Mammary epithelial cell (primary cell): ENCODE measurements at regions of chr7 and their contacts with region 1.

Region 1: GRCh38 chr7:28298870-28299518 is 113.3 kb upstream of the CREB5 start:
- DNase-seq: peak; percentile 60
- H3K4me3 ChIP-seq: no peak overlapping the region
- H3K27ac ChIP-seq: no peak overlapping the region
- H3K4me1 ChIP-seq: peaks cover 13% of the 10 kb centered on the region
- H3K27me3 ChIP-seq: no peaks in the 10 kb centered on the region
- CTCF ChIP-seq: peak; percentile 54 to 68

Region 2: DNA sequence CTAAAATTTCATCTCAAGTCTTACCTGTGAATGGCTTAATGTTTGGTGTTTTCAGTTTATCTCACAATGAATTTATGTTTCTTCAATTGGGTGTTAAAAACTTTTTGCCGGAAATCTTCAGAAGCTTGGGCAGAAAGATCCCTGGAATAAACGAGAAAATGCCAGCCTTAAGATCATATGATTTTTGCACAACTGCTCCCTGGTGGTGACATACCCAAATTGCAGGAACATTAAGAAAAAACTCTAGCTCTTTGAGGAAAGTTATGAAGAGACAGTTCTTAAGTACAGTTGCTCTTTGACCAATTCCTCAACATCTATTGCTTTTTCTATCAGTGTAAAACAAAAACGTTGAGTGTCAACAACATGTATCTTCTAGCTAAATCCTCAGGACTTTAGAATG is 65.1 kb after region 1 on chr7:
- CTCF ChIA-PET with region 1: no interaction called
- dilution Hi-C with region 1: no loop called
- in situ Hi-C with region 1: no loop called
- intact Hi-C with region 1: loop called (anchors 1 kb)
- DNase-seq: no peak
- H3K4me3 ChIP-seq: no peak overlapping the region
- H3K27ac ChIP-seq: no peak overlapping the region
- H3K4me1 ChIP-seq: peaks cover 3% of the 10 kb centered on the region
- H3K27me3 ChIP-seq: no peaks in the 10 kb centered on the region
- CTCF ChIP-seq: peak; percentile 27 to 32

Region 3: DNA sequence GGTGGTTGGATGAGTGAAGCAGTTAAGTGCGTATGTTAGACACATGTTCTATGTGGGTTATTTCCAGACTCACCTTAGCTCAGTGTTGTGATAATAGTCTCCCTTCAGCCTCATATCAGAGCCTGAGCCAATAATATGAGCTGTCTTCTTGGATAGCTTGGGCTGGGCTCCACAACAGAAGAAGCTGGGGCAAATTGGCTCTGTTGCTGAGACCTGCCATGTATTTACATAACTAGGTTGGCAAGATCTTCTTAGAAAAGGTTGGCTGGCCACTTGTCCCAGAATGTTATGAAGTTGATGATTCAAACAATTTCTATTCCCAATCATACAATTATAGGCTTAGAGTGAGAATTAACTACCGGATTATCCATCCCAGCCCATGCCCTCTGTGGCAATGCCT is 77.6 kb after region 1 on chr7:
- CTCF ChIA-PET with region 1: no interaction called
- dilution Hi-C with region 1: no loop called
- in situ Hi-C with region 1: no loop called
- intact Hi-C with region 1: no loop called
- DNase-seq: no peak
- H3K4me3 ChIP-seq: no peak overlapping the region
- H3K27ac ChIP-seq: no peak overlapping the region
- H3K4me1 ChIP-seq: no peaks in the 10 kb centered on the region
- H3K27me3 ChIP-seq: peaks cover 1% of the 10 kb centered on the region
- CTCF ChIP-seq: no peak

Region 4: DNA sequence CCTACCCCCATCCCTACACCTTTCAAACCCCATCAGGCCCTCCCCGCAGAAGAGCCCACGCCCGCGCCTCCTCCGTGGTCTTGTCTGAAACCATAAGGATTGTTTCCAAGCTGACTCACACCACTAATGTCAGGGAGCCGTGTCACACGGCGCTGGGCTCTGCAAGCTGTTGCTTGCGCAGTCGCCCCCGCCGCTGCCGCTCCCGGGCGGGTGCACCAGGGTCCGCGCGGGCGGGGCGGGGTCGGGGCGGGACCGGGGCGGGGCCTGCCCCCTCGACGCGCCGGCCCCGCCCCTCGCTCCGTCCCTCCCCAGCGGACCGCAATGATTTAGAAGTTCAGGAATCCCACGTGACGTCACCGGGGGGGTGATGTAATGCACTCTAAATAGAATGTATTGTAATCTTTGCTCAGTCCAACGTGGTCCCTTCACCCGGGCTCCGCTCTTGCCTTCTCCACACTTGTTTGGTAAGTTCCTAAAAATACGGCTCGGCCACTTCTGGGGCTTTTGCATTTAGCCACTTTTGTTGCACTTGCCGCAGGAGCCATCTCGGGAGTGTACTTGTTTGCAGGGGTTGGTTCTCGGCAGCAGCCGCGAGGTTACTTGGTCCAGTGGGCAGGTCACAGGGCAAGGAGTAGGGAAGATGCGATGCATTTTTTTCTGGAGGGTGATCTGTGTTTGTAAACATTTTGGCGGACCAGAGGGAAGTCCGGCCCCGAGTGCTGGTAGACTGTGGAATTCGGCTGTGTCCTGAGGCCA is 110.1 kb after region 1 on chr7:
- CTCF ChIA-PET with region 1: no interaction called
- dilution Hi-C with region 1: no loop called
- in situ Hi-C with region 1: no loop called
- intact Hi-C with region 1: loop called (anchors 5 kb)
- DNase-seq: peak; percentile 94
- H3K4me3 ChIP-seq: peak overlapping the region; percentile 51 to 77 (median 55)
- H3K27ac ChIP-seq: peak overlapping the region; percentile 61
- H3K4me1 ChIP-seq: peaks cover 42% of the 10 kb centered on the region
- H3K27me3 ChIP-seq: peaks cover 5% of the 10 kb centered on the region
- CTCF ChIP-seq: no peak

Region 5: DNA sequence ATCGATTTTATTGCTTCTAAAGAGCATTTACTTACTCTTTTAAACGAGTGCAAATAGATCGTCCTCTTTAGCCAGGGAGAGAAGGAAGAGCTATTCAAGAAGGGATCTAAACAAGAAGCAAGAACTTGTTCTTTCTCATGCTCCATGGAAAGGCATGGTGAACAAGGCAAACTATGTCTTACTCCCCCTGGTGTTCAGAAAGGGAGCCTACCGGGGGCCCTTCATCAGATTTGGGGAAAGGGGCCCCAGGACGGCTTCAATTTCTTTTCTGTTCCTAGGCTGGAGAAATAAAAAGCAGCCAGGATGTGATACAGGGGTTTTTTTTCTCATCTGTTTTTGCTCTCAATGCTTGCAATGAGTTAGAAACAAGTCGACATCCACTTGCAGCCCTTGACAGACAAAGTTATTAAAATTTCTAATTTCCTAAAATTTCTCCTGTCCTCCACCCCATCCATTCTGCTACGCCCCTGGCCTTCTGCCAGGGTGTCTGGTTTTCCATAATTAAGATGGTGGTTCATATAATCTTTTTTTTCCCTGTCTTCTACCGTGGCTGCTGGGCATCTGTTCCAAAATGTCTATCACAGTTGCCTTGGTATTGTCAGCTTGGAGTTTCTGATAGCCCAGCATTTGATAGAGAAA is 327.7 kb after region 1 on chr7:
- CTCF ChIA-PET with region 1: no interaction called
- dilution Hi-C with region 1: no loop called
- in situ Hi-C with region 1: loop called in 1 of 2 experiments (anchors 5 kb)
- intact Hi-C with region 1: loop called (anchors 1 kb)
- DNase-seq: peak; percentile 39
- H3K4me3 ChIP-seq: no peak overlapping the region
- H3K27ac ChIP-seq: no peak overlapping the region
- H3K4me1 ChIP-seq: peaks cover 5% of the 10 kb centered on the region
- H3K27me3 ChIP-seq: no peaks in the 10 kb centered on the region
- CTCF ChIP-seq: peak; percentile 69 to 75

Region 6: GRCh38 chr7:29146057-29146706 is 847.2 kb after region 1 on chr7 and contains the start of gene CPVL:
- CTCF ChIA-PET with region 1: no interaction called
- dilution Hi-C with region 1: no loop called
- in situ Hi-C with region 1: no loop called
- intact Hi-C with region 1: no loop called
- DNase-seq: no peak
- H3K4me3 ChIP-seq: peak within 1 kb of the TSS; percentile 2 to 45 (median 32)
- H3K27ac ChIP-seq: no peak within 1 kb of the TSS
- H3K4me1 ChIP-seq: peaks cover 10% of the 10 kb centered on the region
- H3K27me3 ChIP-seq: peaks cover 12% of the 10 kb centered on the region
- CTCF ChIP-seq: no peak
- total RNA-seq, gene CPVL: not detected